ENCODE measurements at regions of chr18 and their contacts with region 1.

Region 1: DNA sequence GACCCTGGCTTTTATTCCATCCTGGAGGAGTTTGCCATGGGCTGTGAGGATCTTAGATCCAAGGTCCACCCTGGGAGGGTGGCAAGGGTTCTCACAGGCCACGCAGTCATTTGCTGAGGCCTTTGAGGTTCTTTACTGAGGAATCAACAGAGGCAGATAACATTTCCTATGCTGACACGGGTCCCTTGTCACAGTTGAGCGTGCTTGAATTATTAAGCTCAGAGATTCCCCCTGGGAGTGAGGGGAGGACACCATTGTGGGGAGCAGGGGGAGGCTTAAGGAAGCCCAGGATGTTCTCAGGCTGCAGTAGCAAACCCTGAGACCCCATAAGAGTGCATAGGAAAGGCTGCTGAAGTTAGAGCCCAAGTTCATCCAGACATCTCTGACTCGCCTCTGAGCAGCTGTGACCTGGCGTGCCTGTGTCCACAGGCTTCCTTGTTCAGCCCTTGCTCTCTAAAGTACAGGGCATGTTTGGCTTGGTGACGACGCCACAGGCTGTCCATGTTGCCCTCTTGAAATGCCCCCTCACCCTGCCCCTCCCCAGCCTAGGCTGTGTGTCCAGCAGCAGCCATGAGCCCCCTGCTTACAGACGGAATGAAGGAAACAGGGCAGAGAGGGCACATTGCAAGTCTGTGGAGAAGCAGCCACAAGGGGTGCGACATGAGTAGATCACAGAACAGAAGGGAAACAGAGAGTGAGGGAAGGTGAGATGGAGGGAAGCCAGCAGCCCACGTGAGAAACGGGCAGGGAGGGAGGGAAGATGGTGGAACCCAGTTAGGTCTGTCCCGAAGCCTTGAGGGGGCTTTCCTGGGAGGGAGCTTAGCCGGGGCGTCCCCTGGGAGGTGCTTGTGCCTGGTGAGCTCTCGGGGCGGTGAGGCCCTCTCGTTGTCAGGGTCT is 34.0 kb downstream of the NAPG start:
- DNase-seq: no peak
- H3K4me3 ChIP-seq: peak overlapping the region in 2 of 8 donors; percentile 24 to 49
- H3K27ac ChIP-seq: no peak overlapping the region
- H3K4me1 ChIP-seq: peaks cover 0 to 13% (median 11%) of the 10 kb centered on the region in 6 donors
- H3K27me3 ChIP-seq: no peaks in the 10 kb centered on the region
- CTCF ChIP-seq: no peak
- POLR2A ChIP-seq: no peak

Region 2: GRCh38 chr18:10822456-10822855 is 262.7 kb after region 1 on chr18:
- intact Hi-C with region 1: no loop called
- DNase-seq: no peak
- H3K4me3 ChIP-seq: no peak overlapping the region
- H3K27ac ChIP-seq: no peak overlapping the region
- H3K4me1 ChIP-seq: no peaks in the 10 kb centered on the region
- H3K27me3 ChIP-seq: peaks cover 0 to 19% (median 0%) of the 10 kb centered on the region in 7 donors
- CTCF ChIP-seq: no peak
- POLR2A ChIP-seq: no peak

Region 3: GRCh38 chr18:11553098-11553940 is 993.5 kb after region 1 on chr18:
- intact Hi-C with region 1: loop called (anchors 10 kb)
- DNase-seq: no peak
- H3K4me3 ChIP-seq: no peak overlapping the region
- H3K27ac ChIP-seq: no peak overlapping the region
- H3K4me1 ChIP-seq: no peaks in the 10 kb centered on the region
- H3K27me3 ChIP-seq: peaks cover 0 to 5% (median 0%) of the 10 kb centered on the region in 7 donors
- CTCF ChIP-seq: peak in 10 of 11 experiments; percentile 53 to 89 (median 80)
- POLR2A ChIP-seq: no peak